CD4-positive, alpha-beta memory T cell (primary cell): ENCODE measurements at regions of chr6 and their contacts with region 1.

Region 1: DNA sequence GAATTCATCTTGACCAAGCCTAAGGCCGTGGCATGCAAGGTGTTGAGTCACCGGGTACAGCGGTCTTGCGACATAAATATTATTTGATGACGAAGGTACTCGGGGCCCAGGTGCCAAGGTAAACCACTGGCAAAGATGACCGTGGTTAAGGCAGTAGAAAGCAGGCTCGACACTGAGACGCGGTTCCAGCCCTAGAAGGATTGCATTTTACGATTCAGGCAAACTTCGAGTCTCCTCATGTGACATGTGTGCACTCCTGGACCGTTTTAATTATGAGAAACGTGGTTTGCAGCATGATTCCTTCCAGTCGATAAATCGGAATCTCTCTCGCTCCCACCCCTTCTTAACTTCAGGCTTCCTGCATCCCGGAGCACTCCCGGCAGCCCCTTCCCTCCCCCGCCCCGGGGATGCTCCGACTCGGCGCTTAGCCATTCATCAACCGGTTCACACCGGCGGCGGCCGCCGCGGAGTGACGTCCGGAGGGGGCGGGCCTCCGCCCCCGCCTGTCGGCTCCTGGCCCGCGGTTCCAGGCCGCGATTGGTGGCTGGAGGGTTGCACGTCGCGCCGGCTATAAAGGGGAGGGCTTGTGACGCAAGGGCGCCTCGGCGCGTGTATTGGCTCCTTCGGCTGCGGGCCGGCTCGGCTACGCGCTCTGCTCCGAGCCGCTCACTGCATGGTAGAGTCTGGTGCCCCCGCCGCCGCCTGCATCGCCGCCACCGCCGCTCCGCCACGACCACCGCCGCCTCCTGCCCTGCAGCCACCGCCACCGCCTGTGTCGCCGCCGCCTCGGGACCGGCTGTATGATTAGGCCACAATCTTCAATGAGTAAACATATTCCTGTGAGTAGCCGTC is at the starts of genes LOC128125822 and PTP4A1:
- DNase-seq: peak; percentile 95 to 97 (median 97)
- H3K4me3 ChIP-seq: peak within 1 kb of the TSS; percentile 52 to 71
- H3K4me3 Mint-ChIP-seq: peak within 1 kb of the TSS; percentile 89 to 98 (median 96)
- H3K27ac ChIP-seq: peak within 1 kb of the TSS; percentile 92
- H3K27ac Mint-ChIP-seq: peak within 1 kb of the TSS; percentile 95 to 99 (median 97)
- H3K4me1 ChIP-seq: peaks cover 27% of the 10 kb centered on the region
- H3K4me1 Mint-ChIP-seq: peaks cover 21 to 49% (median 28%) of the 10 kb centered on the region in 4 donors
- H3K27me3 ChIP-seq: no peaks in the 10 kb centered on the region
- H3K27me3 Mint-ChIP-seq: peaks cover 0 to 1% of the 10 kb centered on the region in 2 donors
- total RNA-seq, gene PTP4A1: 22.6 to 30.3 TPM

Region 2: DNA sequence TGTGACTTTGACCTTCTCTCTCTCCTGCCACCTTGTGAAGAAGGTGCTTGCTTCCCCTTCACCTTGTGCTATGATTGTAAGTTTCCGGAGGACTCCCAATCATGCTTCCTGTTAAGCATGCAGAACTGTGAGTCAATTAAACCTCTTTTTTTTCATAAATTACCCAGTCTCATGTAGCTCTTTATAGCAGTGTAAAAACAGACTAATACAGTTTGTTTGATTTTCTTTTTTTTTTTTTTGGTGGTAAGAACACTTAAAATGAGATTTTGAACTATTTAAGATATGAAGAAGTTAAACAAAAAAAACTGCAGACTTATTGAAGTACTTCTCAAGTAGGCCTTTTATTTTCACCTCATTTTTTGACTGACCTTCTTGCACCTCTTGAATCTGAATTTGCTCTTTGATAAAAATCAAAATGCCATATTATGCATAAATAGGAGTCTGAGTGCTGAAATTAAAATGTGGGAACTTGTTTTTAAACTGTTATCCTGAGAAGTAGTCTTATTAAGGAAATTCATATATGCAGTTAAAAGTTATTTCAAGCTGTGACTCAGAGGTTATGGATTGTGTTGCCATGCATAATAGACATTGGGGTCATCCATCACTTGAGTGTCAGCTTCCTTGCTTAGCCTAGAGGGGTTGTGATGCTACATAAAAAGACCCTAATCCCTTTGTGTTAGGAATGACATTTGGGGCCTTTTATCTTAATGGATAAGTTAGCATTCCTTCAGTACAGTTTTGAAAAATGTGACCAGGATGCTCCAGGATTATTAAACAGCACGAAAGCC is 808.8 kb before region 1 on chr6:
- CTCF ChIA-PET with region 1: no interaction called
- POLR2A ChIA-PET with region 1: no interaction called
- intact Hi-C with region 1: no loop called
- DNase-seq: no peak
- H3K4me3 ChIP-seq: no peak overlapping the region
- H3K4me3 Mint-ChIP-seq: no peak overlapping the region
- H3K27ac ChIP-seq: no peak overlapping the region
- H3K27ac Mint-ChIP-seq: no peak overlapping the region
- H3K4me1 ChIP-seq: no peaks in the 10 kb centered on the region
- H3K4me1 Mint-ChIP-seq: no peaks in the 10 kb centered on the region
- H3K27me3 ChIP-seq: no peaks in the 10 kb centered on the region
- H3K27me3 Mint-ChIP-seq: no peaks in the 10 kb centered on the region

Region 3: DNA sequence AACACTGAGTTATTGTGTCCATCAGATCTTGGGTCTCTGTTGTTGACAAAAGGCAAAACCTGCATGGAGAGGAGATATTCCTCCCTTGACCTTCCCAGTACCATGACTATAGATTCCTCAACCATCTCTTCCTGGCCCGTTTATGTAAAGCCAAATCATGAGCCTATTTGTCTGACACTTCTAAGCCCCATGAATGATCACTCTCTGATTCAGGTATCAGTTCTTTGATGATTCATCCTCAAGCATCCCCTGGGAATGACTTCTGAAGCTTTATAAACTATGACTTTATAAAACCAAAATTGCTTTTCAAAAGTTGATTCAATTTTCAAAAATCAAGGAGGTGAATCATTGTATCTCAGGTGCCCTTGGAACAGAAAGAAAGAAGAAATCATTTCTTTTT is 78.5 kb before region 1 on chr6:
- CTCF ChIA-PET with region 1: no interaction called
- POLR2A ChIA-PET with region 1: no interaction called
- intact Hi-C with region 1: no loop called
- DNase-seq: no peak
- H3K4me3 ChIP-seq: no peak overlapping the region
- H3K4me3 Mint-ChIP-seq: no peak overlapping the region
- H3K27ac ChIP-seq: no peak overlapping the region
- H3K27ac Mint-ChIP-seq: no peak overlapping the region
- H3K4me1 ChIP-seq: no peaks in the 10 kb centered on the region
- H3K4me1 Mint-ChIP-seq: no peaks in the 10 kb centered on the region
- H3K27me3 ChIP-seq: no peaks in the 10 kb centered on the region
- H3K27me3 Mint-ChIP-seq: peaks cover 0 to under 1% of the 10 kb centered on the region in 2 donors

Region 4: GRCh38 chr6:63635588-63636517 is 63.7 kb after region 1 on chr6 and contains the start of gene PHF3:
- CTCF ChIA-PET with region 1: interaction called, 11 read pairs
- POLR2A ChIA-PET with region 1: interaction called, 62 read pairs
- intact Hi-C with region 1: loop called (anchors 1 kb)
- DNase-seq: peak; percentile 90 to 94 (median 93)
- H3K4me3 ChIP-seq: peak within 1 kb of the TSS; percentile 71 to 86
- H3K4me3 Mint-ChIP-seq: peak within 1 kb of the TSS; percentile 95 to 100 (median 100)
- H3K27ac ChIP-seq: peak within 1 kb of the TSS; percentile 94
- H3K27ac Mint-ChIP-seq: peak within 1 kb of the TSS; percentile 94 to 99 (median 99)
- H3K4me1 ChIP-seq: peaks cover 49% of the 10 kb centered on the region
- H3K4me1 Mint-ChIP-seq: peaks cover 35 to 54% (median 44%) of the 10 kb centered on the region in 4 donors
- H3K27me3 ChIP-seq: no peaks in the 10 kb centered on the region
- H3K27me3 Mint-ChIP-seq: no peaks in the 10 kb centered on the region
- total RNA-seq, gene PHF3: 115 to 119 TPM

Region 5: DNA sequence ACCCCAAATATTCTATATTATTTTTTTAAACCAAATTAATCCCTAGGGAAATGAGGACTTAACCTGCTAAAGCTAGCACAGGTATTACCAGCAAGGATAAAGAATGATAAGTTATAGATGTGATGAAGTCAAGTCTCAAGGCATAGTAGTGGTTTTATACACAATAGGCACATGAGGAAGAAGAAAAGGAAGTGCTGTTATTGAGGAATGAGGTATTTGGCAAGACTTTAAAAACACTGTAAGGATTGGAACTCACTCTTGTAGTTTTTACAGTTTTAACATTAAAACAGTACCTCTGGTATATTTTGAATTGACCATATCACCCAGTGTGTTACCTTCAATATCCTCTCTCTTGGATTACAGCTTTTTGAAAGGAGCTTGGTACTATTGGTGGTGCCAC is 118.1 kb after region 1 on chr6:
- CTCF ChIA-PET with region 1: no interaction called
- POLR2A ChIA-PET with region 1: no interaction called
- intact Hi-C with region 1: no loop called
- DNase-seq: no peak
- H3K4me3 ChIP-seq: no peak overlapping the region
- H3K4me3 Mint-ChIP-seq: no peak overlapping the region
- H3K27ac ChIP-seq: no peak overlapping the region
- H3K27ac Mint-ChIP-seq: no peak overlapping the region
- H3K4me1 ChIP-seq: no peaks in the 10 kb centered on the region
- H3K4me1 Mint-ChIP-seq: peaks cover 13 to 29% (median 15%) of the 10 kb centered on the region in 4 donors
- H3K27me3 ChIP-seq: no peaks in the 10 kb centered on the region
- H3K27me3 Mint-ChIP-seq: no peaks in the 10 kb centered on the region